ENCODE measurements at regions of chr22 and their contacts with region 1.

Region 1: DNA sequence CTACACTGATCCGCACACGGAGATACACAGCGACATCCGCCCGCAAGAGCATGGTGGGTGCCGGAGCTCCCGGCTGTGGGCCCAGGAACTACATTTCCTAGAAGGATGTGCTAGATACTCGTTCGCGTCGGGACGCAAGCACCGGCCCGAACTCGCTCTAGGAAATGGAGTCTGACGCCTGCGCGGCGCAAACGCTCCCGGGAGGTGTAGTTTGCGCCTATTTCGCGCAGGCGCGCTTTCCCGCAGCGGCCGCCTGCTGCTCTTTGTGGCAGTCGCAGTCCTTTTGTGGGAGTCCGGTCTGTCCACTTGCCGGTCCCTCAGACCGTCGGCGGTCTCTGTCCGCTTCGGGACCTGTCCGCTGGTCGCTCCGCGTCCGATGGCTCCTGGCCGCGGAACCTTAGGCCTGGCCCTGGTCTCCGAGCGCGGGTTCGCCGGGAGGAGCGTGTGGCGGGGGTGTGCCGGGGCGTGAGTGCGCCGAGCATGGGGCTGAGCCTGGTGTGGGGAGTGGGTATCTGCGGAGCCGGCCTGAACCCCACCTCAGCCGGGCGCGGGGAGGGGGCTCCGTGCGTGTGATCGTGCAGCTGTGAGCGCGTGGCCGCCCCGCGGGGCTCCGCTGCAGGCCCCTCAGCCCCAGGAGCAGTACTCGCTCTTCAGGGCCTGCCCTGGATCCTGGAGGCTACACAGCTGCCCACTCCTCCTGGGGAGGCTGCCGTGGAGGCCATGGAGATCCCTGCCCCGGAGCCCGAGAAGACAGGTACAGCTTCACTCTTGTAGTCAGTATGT is at the start of gene ZNF74:
- DNase-seq: peak; percentile 66
- H3K4me3 ChIP-seq: peak within 1 kb of the TSS; percentile 81
- H3K27ac ChIP-seq: peak within 1 kb of the TSS; percentile 68
- H3K27me3 ChIP-seq: no peaks in the 10 kb centered on the region
- CTCF ChIP-seq: 0 out of 2 replicates have a peak, but pooled peaks have one; percentile 1
- polyA plus RNA-seq, gene ZNF74: 8.4 and 8.8 TPM in 2 replicates

Region 2: DNA sequence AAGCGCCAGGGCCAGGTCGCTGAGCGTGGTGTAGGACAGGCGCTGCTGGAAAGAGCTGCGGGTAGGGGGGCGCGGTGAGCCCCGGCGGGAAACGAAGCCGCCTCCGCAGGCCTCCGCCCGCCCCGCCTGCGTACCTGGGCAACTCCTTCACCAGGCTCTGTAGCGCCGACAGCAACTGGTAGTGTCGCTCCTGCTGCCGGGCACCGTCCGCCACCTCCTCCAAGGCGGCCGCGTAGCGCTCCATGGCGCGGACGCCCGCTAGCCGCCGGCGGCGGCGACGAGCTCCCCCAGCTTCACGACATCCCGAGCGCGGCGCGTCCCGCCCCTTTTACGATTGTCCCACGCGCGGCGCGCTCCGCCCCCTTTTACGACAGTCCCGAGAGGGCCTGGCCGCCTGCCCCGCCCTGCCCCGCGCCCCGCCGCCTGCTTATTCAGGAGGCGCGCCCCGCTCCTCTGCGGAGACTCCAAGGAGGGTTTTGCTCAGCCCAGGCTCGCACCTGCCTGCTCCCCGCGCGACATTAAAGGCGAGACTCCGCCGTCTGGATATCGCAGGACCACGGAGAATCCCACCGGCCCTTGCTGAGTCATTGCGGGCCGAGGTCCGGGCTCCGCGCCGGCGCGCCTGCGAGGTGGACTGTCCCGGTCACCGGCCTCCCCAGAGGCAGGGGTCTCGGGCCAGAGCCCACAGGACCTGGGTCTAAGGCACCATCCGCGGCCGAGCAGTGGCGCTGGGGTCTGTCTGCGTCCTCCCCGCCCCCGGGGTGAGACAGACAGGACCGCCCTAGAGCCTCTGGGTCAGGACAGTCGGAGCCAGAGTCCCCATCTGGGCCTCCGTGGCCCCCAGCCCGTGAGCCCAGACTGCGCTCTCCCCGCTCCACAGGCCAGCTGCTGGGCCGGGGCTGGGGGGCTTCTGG is 74.1 kb before region 1 on chr22 and contains the start of gene DGCR6L:
- CTCF ChIA-PET with region 1: no interaction called
- POLR2A ChIA-PET with region 1: interaction called, 10 read pairs
- DNase-seq: peak; percentile 55
- H3K4me3 ChIP-seq: peak within 1 kb of the TSS; percentile 81
- H3K27ac ChIP-seq: peak within 1 kb of the TSS; percentile 65
- H3K27me3 ChIP-seq: no peaks in the 10 kb centered on the region
- CTCF ChIP-seq: no peak
- polyA plus RNA-seq, gene DGCR6L: 45.4 and 60.9 TPM in 2 replicates

Region 3: GRCh38 chr22:20354238-20354975 is 39.7 kb before region 1 on chr22:
- CTCF ChIA-PET with region 1: no interaction called
- POLR2A ChIA-PET with region 1: no interaction called
- DNase-seq: no peak
- H3K4me3 ChIP-seq: no peak overlapping the region
- H3K27ac ChIP-seq: no peak overlapping the region
- H3K27me3 ChIP-seq: no peaks in the 10 kb centered on the region
- CTCF ChIP-seq: no peak

Region 4: DNA sequence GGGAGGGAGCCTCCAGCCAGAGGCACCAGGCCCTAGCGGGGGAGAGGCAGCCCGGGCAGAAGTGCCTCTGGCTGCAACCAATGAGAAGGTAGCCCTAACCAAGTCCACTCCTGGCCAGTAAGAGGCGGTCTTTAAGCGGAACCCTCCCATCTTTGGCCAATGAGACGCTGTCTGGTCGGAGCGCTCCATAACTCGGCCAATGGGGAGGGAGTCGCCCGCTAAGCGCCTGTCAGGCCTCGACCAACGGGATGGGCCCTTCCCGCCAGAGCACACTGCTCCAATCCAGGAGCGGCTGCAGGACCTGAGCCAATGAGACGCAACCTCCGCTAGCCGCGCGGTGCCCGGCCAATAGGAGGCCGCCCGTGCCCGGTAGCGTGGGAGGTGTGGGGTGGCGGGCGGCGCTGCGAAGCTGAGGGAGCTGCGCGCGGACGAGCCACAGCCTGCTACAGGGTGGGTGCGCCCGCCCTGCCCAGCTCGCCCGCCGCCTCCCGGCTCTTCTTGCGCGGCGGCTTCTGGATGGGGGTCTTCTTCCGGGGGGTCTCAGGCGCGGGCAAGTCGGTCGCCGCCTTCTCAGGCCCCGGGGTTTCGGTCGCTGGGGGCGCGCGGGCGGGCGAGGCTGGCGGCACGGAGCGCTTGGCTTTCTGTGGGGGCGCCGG is 31.0 kb after region 1 on chr22:
- CTCF ChIA-PET with region 1: no interaction called
- POLR2A ChIA-PET with region 1: no interaction called
- DNase-seq: no peak
- H3K4me3 ChIP-seq: no peak overlapping the region
- H3K27ac ChIP-seq: no peak overlapping the region
- H3K27me3 ChIP-seq: no peaks in the 10 kb centered on the region
- CTCF ChIP-seq: no peak

Region 5: GRCh38 chr22:20479612-20480196 is 85.6 kb after region 1 on chr22:
- CTCF ChIA-PET with region 1: no interaction called
- POLR2A ChIA-PET with region 1: interaction called, 12 read pairs
- DNase-seq: no peak
- H3K4me3 ChIP-seq: no peak overlapping the region
- H3K27ac ChIP-seq: no peak overlapping the region
- H3K27me3 ChIP-seq: no peaks in the 10 kb centered on the region
- CTCF ChIP-seq: no peak

Measured in AG04450 (cell line).